Activated T-helper 1 cell treated with anti-CD3 and anti-CD28 coated beads, Interleukin-12 subunit alpha, Interleukin-12 subunit beta, Interleukin-2, Interleukin-4 antibody, amounts not matched to agents 30 ng/mL and 10 ng/mL and 1 ng/mL, durations not matched to agents 14 hours and 24 hours and 36 hours (primary cell): ENCODE measurements at regions of chr5 and their contacts with region 1.

Region 1: GRCh38 chr5:180201051-180201987 is 7.7 kb downstream of the RASGEF1C start:
- DNase-seq: no peak
- H3K4me3 Mint-ChIP-seq: no peak overlapping the region
- H3K27ac Mint-ChIP-seq: no peak overlapping the region
- H3K4me1 Mint-ChIP-seq: no peaks in the 10 kb centered on the region
- H3K27me3 Mint-ChIP-seq: peaks cover 4% of the 10 kb centered on the region

Region 2: GRCh38 chr5:180098961-180099732 is 102.2 kb before region 1 on chr5:
- intact Hi-C with region 1: no loop called
- DNase-seq: no peak
- H3K4me3 Mint-ChIP-seq: no peak overlapping the region
- H3K27ac Mint-ChIP-seq: no peak overlapping the region
- H3K4me1 Mint-ChIP-seq: no peaks in the 10 kb centered on the region
- H3K27me3 Mint-ChIP-seq: peaks cover 3% of the 10 kb centered on the region

Region 3: GRCh38 chr5:180328296-180329137 is 127.2 kb after region 1 on chr5:
- intact Hi-C with region 1: loop called (anchors 5 kb)
- DNase-seq: peak; percentile 67
- H3K4me3 Mint-ChIP-seq: no peak overlapping the region
- H3K27ac Mint-ChIP-seq: no peak overlapping the region
- H3K4me1 Mint-ChIP-seq: no peaks in the 10 kb centered on the region
- H3K27me3 Mint-ChIP-seq: peaks cover 24% of the 10 kb centered on the region